ENCODE measurements at regions of chr6 and their contacts with region 1.

Region 1: DNA sequence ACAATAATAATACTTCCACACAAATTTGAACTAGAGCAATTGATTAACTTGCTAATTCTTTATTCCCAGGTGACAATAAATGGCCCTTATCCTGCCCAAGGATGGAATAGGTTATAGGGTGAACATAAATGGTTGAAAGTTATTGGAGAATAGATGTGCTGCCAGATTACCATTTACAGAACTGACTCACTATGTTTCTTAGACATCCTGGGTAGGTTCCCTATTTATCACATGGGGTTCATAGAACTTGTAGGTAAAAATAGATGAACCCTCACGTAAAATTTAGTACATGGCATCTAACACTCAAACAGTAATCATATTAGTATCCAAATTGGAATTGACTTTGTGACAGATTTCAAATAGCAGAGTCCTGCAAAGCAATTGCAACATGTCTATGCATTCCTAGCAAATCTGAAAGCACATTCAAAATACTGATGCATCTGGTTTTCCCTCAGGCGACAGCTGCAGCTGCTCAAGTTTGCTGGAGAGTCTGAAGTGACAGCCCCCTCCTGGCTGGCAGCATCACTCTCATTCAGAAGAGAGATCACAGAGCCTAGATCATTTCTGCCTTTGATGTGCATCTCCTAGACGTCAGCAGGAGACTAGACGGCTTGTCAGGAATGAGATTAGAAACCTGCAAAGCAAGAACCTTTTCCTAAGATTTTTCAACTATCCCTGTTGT is 80.2 kb upstream of the RNF217 start:
- DNase-seq: peak; percentile 29 to 77
- H3K4me3 ChIP-seq: peak overlapping the region; percentile 33; the same call in 1 of the 2 replicates
- H3K27ac ChIP-seq: peak overlapping the region; percentile 70
- H3K4me1 ChIP-seq: peaks cover 37% of the 10 kb centered on the region
- H3K27me3 ChIP-seq: no peaks in the 10 kb centered on the region
- CTCF ChIP-seq: no peak

Region 2: GRCh38 chr6:124830506-124830905 is 51.5 kb before region 1 on chr6:
- CTCF ChIA-PET with region 1: no interaction called
- POLR2A ChIA-PET with region 1: no interaction called
- intact Hi-C with region 1: no loop called
- DNase-seq: no peak
- H3K4me3 ChIP-seq: no peak overlapping the region
- H3K27ac ChIP-seq: no peak overlapping the region
- H3K4me1 ChIP-seq: no peaks in the 10 kb centered on the region
- H3K27me3 ChIP-seq: no peaks in the 10 kb centered on the region
- CTCF ChIP-seq: no peak

Region 3: DNA sequence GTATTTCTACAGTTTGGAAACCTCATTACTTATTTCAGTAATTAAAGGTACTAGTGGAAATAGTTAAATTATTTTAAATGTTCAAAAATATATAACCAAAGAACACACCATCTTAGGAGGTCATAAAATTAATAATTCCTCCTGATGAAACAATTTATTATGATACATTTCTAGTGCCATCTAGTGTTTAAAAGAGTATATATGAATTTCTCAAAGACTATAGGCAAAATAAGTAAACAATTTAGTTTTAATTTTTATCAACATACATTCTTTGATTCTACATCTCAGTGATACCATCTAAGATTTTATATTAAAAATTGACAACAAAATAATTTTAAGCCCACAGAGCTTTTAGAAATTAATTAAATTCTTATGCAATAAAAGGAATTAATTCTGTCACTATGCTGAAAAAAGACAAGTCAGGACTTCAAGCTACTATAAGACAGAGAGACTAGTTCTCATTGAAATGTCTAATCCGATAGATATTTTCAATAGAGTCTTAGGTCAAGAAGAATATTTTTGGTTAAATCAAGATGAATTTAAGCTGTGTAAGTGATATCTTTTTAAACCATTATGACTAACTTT is 27.6 kb before region 1 on chr6:
- CTCF ChIA-PET with region 1: no interaction called
- POLR2A ChIA-PET with region 1: no interaction called
- intact Hi-C with region 1: no loop called
- DNase-seq: no peak
- H3K4me3 ChIP-seq: no peak overlapping the region
- H3K27ac ChIP-seq: no peak overlapping the region
- H3K4me1 ChIP-seq: no peaks in the 10 kb centered on the region
- H3K27me3 ChIP-seq: no peaks in the 10 kb centered on the region
- CTCF ChIP-seq: peak; percentile 76

Region 4: DNA sequence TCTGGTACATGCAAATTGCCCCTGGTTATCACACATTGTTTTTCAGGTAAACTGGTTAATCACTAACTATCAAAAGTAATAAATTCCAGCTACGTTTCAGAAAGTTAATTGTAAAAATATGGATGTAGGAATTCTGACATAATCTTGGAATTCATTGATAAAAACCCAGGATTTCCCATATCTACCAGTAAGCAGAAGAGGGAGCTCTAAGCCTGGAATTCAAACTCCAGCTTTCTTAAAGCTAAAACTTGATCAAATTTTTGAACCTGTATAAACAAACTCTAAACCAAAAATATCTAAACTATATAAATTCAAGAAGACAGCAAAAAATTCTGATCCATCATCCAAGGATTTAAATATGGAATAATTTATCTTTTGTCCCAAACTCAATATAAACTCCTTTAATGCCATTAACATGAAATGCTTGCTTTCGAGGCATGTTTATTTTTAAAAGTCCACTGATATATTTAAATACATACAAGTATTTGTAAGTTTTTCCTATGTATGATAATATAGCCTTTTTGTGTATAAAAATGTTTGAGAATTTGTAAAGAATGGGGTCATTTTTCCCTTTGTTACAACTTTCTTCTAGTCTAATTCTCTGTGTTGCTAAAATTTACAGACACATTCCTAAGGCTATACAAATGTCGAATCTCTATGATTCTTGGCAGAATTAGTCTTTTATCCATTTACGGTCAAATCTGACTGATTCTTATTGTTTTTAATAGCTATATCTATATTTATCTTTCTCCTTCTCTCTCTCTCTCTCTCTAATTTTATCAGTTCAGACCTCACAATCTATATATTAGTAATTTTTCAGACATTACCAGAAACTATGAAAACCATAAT is 11.2 kb before region 1 on chr6:
- CTCF ChIA-PET with region 1: no interaction called
- POLR2A ChIA-PET with region 1: no interaction called
- intact Hi-C with region 1: no loop called
- DNase-seq: no peak
- H3K4me3 ChIP-seq: no peak overlapping the region
- H3K27ac ChIP-seq: no peak overlapping the region
- H3K4me1 ChIP-seq: no peaks in the 10 kb centered on the region
- H3K27me3 ChIP-seq: no peaks in the 10 kb centered on the region
- CTCF ChIP-seq: peak; percentile 92

Region 5: DNA sequence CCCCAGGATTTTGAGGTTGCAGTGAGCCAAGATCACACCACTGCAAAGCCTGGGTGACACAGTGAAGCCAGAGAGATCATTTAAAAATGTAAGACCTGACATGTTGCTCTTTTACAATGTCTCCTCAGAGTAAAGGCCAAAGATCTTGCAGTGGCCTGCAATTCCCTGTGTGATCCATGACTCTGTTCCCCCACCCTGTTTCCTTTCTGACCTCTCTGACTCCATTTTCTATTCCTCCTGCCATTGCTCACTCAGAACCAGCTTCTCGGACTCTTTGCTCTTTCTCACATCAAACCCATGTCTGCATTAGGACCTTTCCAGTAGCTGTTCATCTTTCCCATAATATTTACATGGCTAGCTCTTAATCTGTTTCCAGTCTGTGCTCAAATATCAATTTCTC is 108.9 kb after region 1 on chr6:
- CTCF ChIA-PET with region 1: no interaction called
- POLR2A ChIA-PET with region 1: interaction called, 10 read pairs
- intact Hi-C with region 1: no loop called
- DNase-seq: no peak
- H3K4me3 ChIP-seq: no peak overlapping the region
- H3K27ac ChIP-seq: no peak overlapping the region
- H3K4me1 ChIP-seq: peaks cover 7% of the 10 kb centered on the region; the same call in 1 of the 2 replicates
- H3K27me3 ChIP-seq: no peaks in the 10 kb centered on the region
- CTCF ChIP-seq: no peak

Region 6: GRCh38 chr6:125046107-125046925 is 164.3 kb after region 1 on chr6:
- CTCF ChIA-PET with region 1: no interaction called
- POLR2A ChIA-PET with region 1: no interaction called
- intact Hi-C with region 1: loop called (anchors 1 kb)
- DNase-seq: peak in 1 of 2 experiments; percentile 74
- H3K4me3 ChIP-seq: no peak overlapping the region
- H3K27ac ChIP-seq: no peak overlapping the region
- H3K4me1 ChIP-seq: no peaks in the 10 kb centered on the region
- H3K27me3 ChIP-seq: no peaks in the 10 kb centered on the region
- CTCF ChIP-seq: no peak

Measured in PC-9 (cell line).